MCF 10A (cell line): ENCODE measurements at regions of chr6 and their contacts with region 1.

Region 1: DNA sequence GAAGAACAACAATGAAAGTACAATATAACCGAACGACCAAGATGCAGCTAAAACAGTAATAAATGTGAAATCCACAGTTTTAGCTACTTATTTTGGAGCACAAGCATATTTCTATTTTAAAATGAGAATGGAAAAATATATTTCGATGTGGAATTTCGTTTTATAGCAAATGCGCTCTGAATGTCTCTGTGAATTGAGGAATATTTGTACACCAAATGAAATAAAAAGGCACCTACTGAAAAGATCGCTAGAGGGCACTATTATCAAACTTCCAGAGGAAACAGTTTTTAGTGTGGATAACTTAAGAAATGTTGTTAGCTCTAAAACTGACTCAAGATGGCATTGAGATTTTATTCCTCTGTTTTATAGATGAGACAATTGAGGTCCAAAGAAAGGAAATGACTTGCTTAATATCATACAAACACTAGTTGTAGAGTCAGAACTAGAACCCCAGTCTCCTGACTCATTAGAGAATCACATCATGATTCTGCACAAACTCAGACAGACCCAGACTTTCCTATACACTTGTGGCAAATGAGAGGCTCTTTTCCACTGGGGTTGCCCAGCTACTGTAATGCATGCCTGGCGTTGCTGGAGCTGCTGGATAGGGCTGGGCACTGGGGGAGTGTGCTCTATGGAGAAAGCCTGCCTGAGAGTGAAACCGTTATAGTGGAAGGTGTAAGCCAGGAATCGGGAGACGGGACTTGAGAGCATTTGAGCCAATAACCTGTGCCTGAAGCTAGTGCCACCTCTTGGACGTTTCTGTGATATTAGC is 51.9 kb downstream of the GCLC start:
- DNase-seq: peak; percentile 74
- H3K4me3 Mint-ChIP-seq: peak overlapping the region; percentile 49
- H3K27ac Mint-ChIP-seq: no peak overlapping the region
- H3K4me1 Mint-ChIP-seq: peaks cover 29% of the 10 kb centered on the region
- H3K27me3 Mint-ChIP-seq: no peaks in the 10 kb centered on the region
- CTCF ChIP-seq: peak; percentile 71

Region 2: GRCh38 chr6:53513056-53513455 is 20.0 kb after region 1 on chr6:
- CTCF ChIA-PET with region 1: interaction called, 13 read pairs
- POLR2A ChIA-PET with region 1: interaction called, 7 read pairs
- intact Hi-C with region 1: no loop called
- DNase-seq: no peak
- H3K4me3 Mint-ChIP-seq: no peak overlapping the region
- H3K27ac Mint-ChIP-seq: no peak overlapping the region
- H3K4me1 Mint-ChIP-seq: peaks cover 21% of the 10 kb centered on the region
- H3K27me3 Mint-ChIP-seq: no peaks in the 10 kb centered on the region
- CTCF ChIP-seq: no peak

Region 3: GRCh38 chr6:53643481-53643965 is 150.5 kb after region 1 on chr6:
- CTCF ChIA-PET with region 1: interaction called, 102 read pairs
- POLR2A ChIA-PET with region 1: interaction called, 10 read pairs
- intact Hi-C with region 1: no loop called
- DNase-seq: no peak
- H3K4me3 Mint-ChIP-seq: no peak overlapping the region
- H3K27ac Mint-ChIP-seq: no peak overlapping the region
- H3K4me1 Mint-ChIP-seq: peaks cover 16% of the 10 kb centered on the region
- H3K27me3 Mint-ChIP-seq: no peaks in the 10 kb centered on the region
- CTCF ChIP-seq: no peak

Region 4: GRCh38 chr6:53679446-53679933 is 186.4 kb after region 1 on chr6:
- CTCF ChIA-PET with region 1: interaction called, 10 read pairs
- POLR2A ChIA-PET with region 1: interaction called, 3 read pairs
- intact Hi-C with region 1: loop called (anchors 1 kb)
- DNase-seq: peak; percentile 58
- H3K4me3 Mint-ChIP-seq: no peak overlapping the region
- H3K27ac Mint-ChIP-seq: peak overlapping the region; percentile 37
- H3K4me1 Mint-ChIP-seq: no peaks in the 10 kb centered on the region
- H3K27me3 Mint-ChIP-seq: no peaks in the 10 kb centered on the region
- CTCF ChIP-seq: peak; percentile 35

Region 5: DNA sequence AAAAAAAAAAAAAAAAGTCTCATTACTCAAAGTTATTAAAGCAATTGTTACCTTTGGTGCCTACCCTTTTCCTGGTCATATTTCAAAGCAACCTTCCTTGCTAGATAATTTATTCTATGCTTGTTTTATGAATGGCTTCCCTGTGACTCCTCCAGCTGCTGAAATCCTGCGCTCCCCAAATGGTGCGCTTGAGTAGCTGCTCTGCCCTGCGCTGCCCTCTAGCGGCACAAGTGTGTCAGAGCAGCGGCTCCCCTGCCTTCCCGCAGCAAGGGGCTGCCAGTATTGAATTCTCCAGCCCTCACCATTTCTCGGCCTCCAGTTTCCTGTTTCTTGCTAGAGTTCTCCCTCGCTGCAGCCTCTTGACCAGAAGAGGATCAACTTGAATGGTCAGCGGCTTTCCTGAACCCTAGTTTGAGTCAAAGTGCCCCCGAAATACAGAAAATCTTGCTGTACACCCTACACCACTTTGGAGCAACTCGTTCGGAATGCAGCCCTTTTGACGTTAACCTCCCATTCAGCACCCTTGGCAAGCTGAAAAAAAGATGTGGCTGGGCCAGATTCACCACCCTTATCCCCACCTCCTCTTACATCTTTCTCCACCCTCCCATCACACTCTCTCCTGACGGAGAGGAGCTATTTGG is 232.9 kb after region 1 on chr6:
- CTCF ChIA-PET with region 1: interaction called, 197 read pairs
- POLR2A ChIA-PET with region 1: interaction called, 7 read pairs
- intact Hi-C with region 1: loop called (anchors 1 kb)
- DNase-seq: peak; percentile 75
- H3K4me3 Mint-ChIP-seq: no peak overlapping the region
- H3K27ac Mint-ChIP-seq: no peak overlapping the region
- H3K4me1 Mint-ChIP-seq: peaks cover 15% of the 10 kb centered on the region
- H3K27me3 Mint-ChIP-seq: no peaks in the 10 kb centered on the region
- CTCF ChIP-seq: peak; percentile 93